GM12878 (cell line): ENCODE measurements at regions of chr10 and their contacts with region 1.

Region 1: GRCh38 chr10:5813287-5814109 is at the start of gene GDI2:
- DNase-seq: peak; percentile 82
- ATAC-seq: peak; percentile 85
- H3K4me3 ChIP-seq: peak within 1 kb of the TSS; percentile 91
- H3K27ac ChIP-seq: peak within 1 kb of the TSS; percentile 97
- H3K4me1 ChIP-seq: peaks cover 41% of the 10 kb centered on the region
- H3K27me3 ChIP-seq: no peaks in the 10 kb centered on the region
- CTCF ChIP-seq: peak in 1 of 3 experiments; percentile 8; a peak in 1 of 6 replicates
- EP300 ChIP-seq: no peak
- POLR2A ChIP-seq: peak; percentile 90
- RAD21 ChIP-seq: no peak
- polyA plus RNA-seq, gene GDI2: 264 to 334 TPM

Region 2: DNA sequence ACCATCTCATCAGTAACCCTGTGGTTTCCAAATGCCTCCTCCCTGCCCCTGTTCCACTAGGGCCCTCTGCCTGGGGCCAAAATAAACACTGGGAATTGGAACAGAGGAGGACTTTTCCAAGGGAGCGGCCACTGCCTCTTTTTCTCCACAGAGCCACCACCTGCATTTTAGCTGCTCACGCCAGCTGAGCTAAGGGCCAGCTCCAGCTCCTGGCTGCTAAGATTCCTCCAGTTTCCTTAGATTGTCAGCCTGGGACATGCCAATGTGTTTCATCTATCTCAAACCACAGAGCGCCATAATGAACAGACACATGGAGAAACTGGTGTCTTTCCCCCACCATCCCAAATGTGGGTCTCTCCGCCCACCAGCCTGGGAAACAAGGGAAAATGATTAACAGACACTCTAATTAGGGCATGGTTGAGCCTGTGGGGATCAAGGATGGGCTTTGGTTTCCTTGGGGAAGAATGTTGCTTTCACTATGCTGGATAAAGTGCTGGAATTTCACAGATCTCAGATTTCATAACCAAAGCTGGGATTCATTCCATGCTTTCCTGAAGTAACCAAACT is 199.3 kb before region 1 on chr10:
- CTCF ChIA-PET with region 1: no interaction called
- POLR2A ChIA-PET with region 1: no interaction called
- RAD21 ChIA-PET with region 1: no interaction called
- SMC1A ChIA-PET with region 1: no interaction called
- in situ Hi-C with region 1: no loop called
- intact Hi-C with region 1: no loop called
- DNase-seq: no peak
- ATAC-seq: no peak
- H3K4me3 ChIP-seq: no peak overlapping the region
- H3K27ac ChIP-seq: no peak overlapping the region
- H3K4me1 ChIP-seq: no peaks in the 10 kb centered on the region
- H3K27me3 ChIP-seq: peaks cover 0 to 6% of the 10 kb centered on the region in 2 experiments; a peak in 3 of 4 replicates
- CTCF ChIP-seq: no peak
- EP300 ChIP-seq: no peak
- POLR2A ChIP-seq: no peak
- RAD21 ChIP-seq: no peak

Region 3: DNA sequence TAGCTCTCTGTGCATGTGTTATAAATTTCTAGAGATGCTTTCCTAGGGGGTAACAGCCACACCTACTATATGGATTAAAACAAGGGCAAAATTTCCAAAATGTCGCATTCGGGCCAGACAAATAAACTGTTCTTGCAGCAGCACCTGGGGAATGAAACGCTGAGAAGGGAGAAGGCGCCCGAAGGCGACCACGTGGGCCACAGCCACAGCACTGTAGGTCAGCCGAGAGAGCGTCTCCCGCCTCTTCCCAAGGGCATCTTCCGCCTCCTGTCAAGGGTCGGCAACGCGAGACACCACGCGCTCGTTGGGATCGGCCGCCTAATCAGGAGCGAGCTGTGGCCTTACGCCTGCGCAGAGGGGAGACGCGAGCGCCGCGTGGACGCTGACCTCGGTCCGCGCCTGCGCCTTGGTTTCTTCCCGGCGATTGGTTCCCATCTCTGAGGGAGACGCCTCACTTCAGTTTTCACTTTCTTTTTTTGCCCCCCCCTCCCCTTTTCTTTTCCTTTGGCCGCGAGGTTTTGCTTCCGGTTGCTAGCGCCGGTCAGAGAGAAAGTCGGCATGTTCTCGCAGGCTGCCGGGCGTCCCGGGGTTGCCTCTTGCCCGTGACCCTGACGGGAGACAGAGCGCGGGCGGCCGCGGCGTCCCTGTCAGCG is 129.1 kb before region 1 on chr10 and contains the start of gene TASOR2:
- CTCF ChIA-PET with region 1: interaction called, 8 read pairs
- POLR2A ChIA-PET with region 1: interaction called, 3 read pairs
- RAD21 ChIA-PET with region 1: interaction called, 3 read pairs
- SMC1A ChIA-PET with region 1: interaction called, 7 read pairs
- in situ Hi-C with region 1: no loop called
- intact Hi-C with region 1: loop called (anchors 2 kb)
- DNase-seq: peak; percentile 96
- ATAC-seq: peak; percentile 88
- H3K4me3 ChIP-seq: peak within 1 kb of the TSS; percentile 95
- H3K27ac ChIP-seq: peak within 1 kb of the TSS; percentile 90
- H3K4me1 ChIP-seq: peaks cover 6% of the 10 kb centered on the region; the same call in 1 of the 2 replicates
- H3K27me3 ChIP-seq: no peaks in the 10 kb centered on the region
- CTCF ChIP-seq: no peak
- EP300 ChIP-seq: no peak
- POLR2A ChIP-seq: peak; percentile 76
- RAD21 ChIP-seq: no peak
- polyA plus RNA-seq, gene TASOR2: 8.2 to 10.6 TPM

Region 4: GRCh38 chr10:5854106-5854570 is 40.6 kb after region 1 on chr10:
- CTCF ChIA-PET with region 1: interaction called, 10 read pairs
- POLR2A ChIA-PET with region 1: interaction called, 10 read pairs
- RAD21 ChIA-PET with region 1: interaction called, 19 read pairs
- SMC1A ChIA-PET with region 1: interaction called, 23 read pairs
- in situ Hi-C with region 1: no loop called
- intact Hi-C with region 1: loop called (anchors 2 kb)
- DNase-seq: no peak
- ATAC-seq: no peak
- H3K4me3 ChIP-seq: no peak overlapping the region
- H3K27ac ChIP-seq: no peak overlapping the region
- H3K4me1 ChIP-seq: peaks cover 8% of the 10 kb centered on the region
- H3K27me3 ChIP-seq: no peaks in the 10 kb centered on the region; a peak in 1 of 4 replicates
- CTCF ChIP-seq: no peak
- EP300 ChIP-seq: no peak
- POLR2A ChIP-seq: no peak
- RAD21 ChIP-seq: no peak

Region 5: GRCh38 chr10:5873515-5873995 is 60.1 kb after region 1 on chr10:
- CTCF ChIA-PET with region 1: interaction called, 18 read pairs
- POLR2A ChIA-PET with region 1: interaction called, 6 read pairs
- RAD21 ChIA-PET with region 1: interaction called, 9 read pairs
- SMC1A ChIA-PET with region 1: interaction called, 20 read pairs
- in situ Hi-C with region 1: no loop called
- intact Hi-C with region 1: loop called (anchors 1 kb)
- DNase-seq: peak; percentile 59
- ATAC-seq: peak; percentile 98
- H3K4me3 ChIP-seq: peak overlapping the region; percentile 26; the same call in 1 of the 2 replicates
- H3K27ac ChIP-seq: 0 out of 2 replicates have a peak overlapping the region, but pooled peaks have one; percentile 18
- H3K4me1 ChIP-seq: peaks cover 3% of the 10 kb centered on the region
- H3K27me3 ChIP-seq: no peaks in the 10 kb centered on the region
- CTCF ChIP-seq: peak; percentile 64 to 73 (median 66)
- EP300 ChIP-seq: no peak
- POLR2A ChIP-seq: no peak
- RAD21 ChIP-seq: peak; percentile 71

Region 6: DNA sequence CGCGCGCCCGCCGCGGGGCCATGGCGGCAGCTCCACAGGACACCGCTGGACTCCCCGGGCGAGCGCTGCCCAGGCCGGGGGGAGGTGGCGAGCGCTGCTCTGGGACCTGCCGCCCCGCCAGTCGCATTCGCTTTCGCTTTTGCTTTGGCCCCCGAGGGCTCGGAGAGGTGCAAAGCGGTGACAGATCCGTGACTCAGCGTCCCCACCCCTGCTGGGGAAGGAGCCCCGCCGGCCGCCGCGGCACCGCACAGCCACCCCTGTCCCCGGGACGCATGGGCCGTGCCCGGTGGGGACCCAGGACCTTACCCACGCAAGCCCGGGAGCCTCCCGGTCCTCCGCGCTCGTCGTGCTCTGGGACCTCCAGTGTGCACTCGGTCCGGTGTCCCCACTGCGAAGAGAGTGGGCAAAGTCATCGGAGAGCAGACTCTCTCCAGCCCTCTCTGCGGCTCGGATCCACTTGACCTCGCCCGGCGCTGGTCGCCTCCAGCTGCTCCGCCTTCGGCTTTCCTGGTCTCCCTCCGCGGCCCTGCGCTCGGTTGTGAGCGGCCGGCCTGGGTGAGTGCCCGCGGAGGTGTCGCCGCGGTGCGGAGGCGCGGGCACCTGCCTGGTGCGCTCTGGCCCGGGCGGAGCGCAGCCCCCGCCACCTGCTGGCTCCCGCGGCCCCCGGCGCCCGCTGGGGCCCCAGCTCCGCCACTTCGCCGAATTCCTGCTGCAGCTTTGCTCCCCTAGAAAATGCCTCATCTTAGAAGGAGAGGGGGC is 164.2 kb after region 1 on chr10 and contains the start of gene IL15RA:
- CTCF ChIA-PET with region 1: interaction called, 4 read pairs
- POLR2A ChIA-PET with region 1: interaction called, 4 read pairs
- RAD21 ChIA-PET with region 1: interaction called, 5 read pairs
- SMC1A ChIA-PET with region 1: interaction called, 5 read pairs
- in situ Hi-C with region 1: no loop called
- intact Hi-C with region 1: loop called (anchors 2 kb)
- DNase-seq: no peak
- ATAC-seq: peak; percentile 78
- H3K4me3 ChIP-seq: peak within 1 kb of the TSS; percentile 95
- H3K27ac ChIP-seq: peak within 1 kb of the TSS; percentile 88
- H3K4me1 ChIP-seq: peaks cover 12% of the 10 kb centered on the region
- H3K27me3 ChIP-seq: no peaks in the 10 kb centered on the region; a peak in 1 of 4 replicates
- CTCF ChIP-seq: peak; percentile 22 to 54 (median 30); a peak in 5 of 6 replicates
- EP300 ChIP-seq: no peak
- POLR2A ChIP-seq: peak; percentile 65
- RAD21 ChIP-seq: peak; percentile 21; the same call in 1 of the 2 replicates
- polyA plus RNA-seq, gene IL15RA: 2.0 to 4.2 TPM